AG04450 (cell line): ENCODE measurements at regions of chr11 and their contacts with region 1.

Region 1: GRCh38 chr11:59207988-59208451 is 4.7 kb downstream of the MPEG1 start:
- DNase-seq: peak; percentile 43
- H3K4me3 ChIP-seq: no peak overlapping the region
- H3K27ac ChIP-seq: no peak overlapping the region
- H3K27me3 ChIP-seq: peaks cover 30% of the 10 kb centered on the region
- CTCF ChIP-seq: peak; percentile 75

Region 2: GRCh38 chr11:58963528-58964104 is 244.4 kb before region 1 on chr11:
- CTCF ChIA-PET with region 1: no interaction called
- POLR2A ChIA-PET with region 1: no interaction called
- DNase-seq: peak; percentile 27
- H3K4me3 ChIP-seq: peak overlapping the region; percentile 25; the same call in 1 of the 2 replicates
- H3K27ac ChIP-seq: no peak overlapping the region
- H3K27me3 ChIP-seq: peaks cover 4% of the 10 kb centered on the region
- CTCF ChIP-seq: peak; percentile 45

Region 3: DNA sequence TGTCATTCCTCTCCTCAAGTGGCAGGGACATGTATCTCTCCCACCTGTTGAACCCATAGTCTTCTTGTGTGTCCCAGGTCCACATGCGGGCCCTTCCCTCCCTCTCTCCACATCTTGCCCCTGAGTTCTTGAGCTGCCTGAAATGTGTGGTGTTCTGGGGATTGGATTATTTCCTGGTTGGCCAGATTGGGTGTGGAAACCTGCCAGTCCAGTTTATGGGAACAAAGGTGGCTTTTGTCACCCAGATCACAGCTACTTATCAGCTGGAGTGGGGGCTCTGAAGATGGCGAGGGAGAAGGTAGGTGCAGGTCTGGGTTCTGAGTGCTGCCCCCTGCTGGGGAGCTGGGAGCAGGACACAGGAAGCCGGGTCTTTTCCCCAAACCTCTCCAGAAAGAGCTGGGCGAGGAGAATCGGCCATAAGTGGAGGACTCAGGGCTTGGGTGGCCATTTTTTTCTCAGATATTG is 21.9 kb before region 1 on chr11:
- CTCF ChIA-PET with region 1: interaction called, 41 read pairs
- POLR2A ChIA-PET with region 1: no interaction called
- DNase-seq: no peak
- H3K4me3 ChIP-seq: no peak overlapping the region
- H3K27ac ChIP-seq: no peak overlapping the region
- H3K27me3 ChIP-seq: no peaks in the 10 kb centered on the region
- CTCF ChIP-seq: peak; percentile 59

Region 4: GRCh38 chr11:59191890-59192289 is 16.1 kb before region 1 on chr11:
- CTCF ChIA-PET with region 1: interaction called, 41 read pairs
- POLR2A ChIA-PET with region 1: no interaction called
- DNase-seq: no peak
- H3K4me3 ChIP-seq: no peak overlapping the region
- H3K27ac ChIP-seq: no peak overlapping the region
- H3K27me3 ChIP-seq: no peaks in the 10 kb centered on the region
- CTCF ChIP-seq: no peak

Region 5: GRCh38 chr11:59197991-59198390 is 10.0 kb before region 1 on chr11:
- CTCF ChIA-PET with region 1: interaction called, 28 read pairs
- POLR2A ChIA-PET with region 1: no interaction called
- DNase-seq: no peak
- H3K4me3 ChIP-seq: no peak overlapping the region
- H3K27ac ChIP-seq: no peak overlapping the region
- H3K27me3 ChIP-seq: no peaks in the 10 kb centered on the region
- CTCF ChIP-seq: no peak